Stomach (tissue), 19 donors: ENCODE measurements at regions of chrX and their contacts with region 1.

Region 1: DNA sequence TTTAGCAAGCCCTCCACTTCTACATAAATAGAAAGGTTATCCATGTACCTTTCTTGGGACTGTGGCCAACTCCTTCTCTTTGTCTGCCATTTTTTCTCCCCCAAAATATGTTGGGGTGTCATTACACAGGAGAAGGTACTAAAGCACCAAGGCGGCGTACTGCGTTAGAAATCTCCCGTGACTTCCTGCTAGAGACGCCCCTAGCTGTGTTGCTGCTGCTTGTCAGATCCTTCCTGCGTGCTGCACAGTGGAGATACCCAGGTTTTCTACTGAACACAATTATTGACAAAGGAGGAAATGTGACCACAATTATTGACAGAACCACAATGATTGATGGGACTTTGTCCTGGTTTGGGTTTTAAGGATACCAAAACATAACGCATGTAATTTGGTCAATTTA is 97.7 kb downstream of the EFHC2 start:
- DNase-seq: no peak
- H3K4me3 ChIP-seq: no peak overlapping the region
- H3K27ac ChIP-seq: no peak overlapping the region
- H3K4me1 ChIP-seq: no peaks in the 10 kb centered on the region
- H3K27me3 ChIP-seq: no peaks in the 10 kb centered on the region
- CTCF ChIP-seq: no peak
- EP300 ChIP-seq: no peak
- POLR2A ChIP-seq: no peak

Region 2: GRCh38 chrX:43961699-43962098 is 284.0 kb before region 1 on chrX:
- intact Hi-C with region 1: loop called (anchors 5 kb)
- DNase-seq: no peak
- H3K4me3 ChIP-seq: no peak overlapping the region
- H3K27ac ChIP-seq: no peak overlapping the region
- H3K4me1 ChIP-seq: no peaks in the 10 kb centered on the region
- H3K27me3 ChIP-seq: peaks cover 0 to 3% (median 2%) of the 10 kb centered on the region in 3 donors
- CTCF ChIP-seq: no peak
- EP300 ChIP-seq: no peak
- POLR2A ChIP-seq: no peak